ENCODE measurements at regions of chr6 and their contacts with region 1.

Region 1: DNA sequence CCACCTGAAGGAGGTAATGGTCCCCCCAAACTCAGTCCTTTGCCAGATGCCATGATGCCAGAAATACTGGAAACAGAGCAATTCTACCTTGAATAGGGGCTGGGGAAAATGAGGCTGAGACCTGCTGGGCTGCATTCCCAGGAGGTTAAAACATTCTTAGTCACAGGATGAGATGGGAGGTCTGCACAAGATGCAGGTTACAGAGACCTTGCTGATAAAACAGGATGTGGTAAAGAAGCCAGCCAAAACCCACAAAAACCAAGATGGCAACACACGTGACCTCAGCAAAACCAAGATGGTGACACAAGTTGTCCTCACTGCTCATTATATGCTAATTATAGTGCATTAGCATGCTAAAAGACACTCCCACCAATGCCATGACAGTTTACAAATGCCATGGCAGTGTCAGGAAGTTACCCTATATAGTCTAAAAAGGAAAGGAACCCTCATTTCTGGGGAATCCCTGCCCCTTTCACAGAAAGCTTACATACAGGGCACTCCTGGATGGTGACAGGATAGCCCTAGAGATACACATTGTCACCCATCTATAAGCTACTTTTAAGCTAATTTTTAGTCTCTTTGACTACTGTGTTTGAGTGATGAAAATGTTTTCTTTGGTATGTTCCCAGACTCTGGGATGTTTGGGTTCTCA is 979.7 kb downstream of the TBC1D32 start:
- DNase-seq: no peak
- ATAC-seq: no peak
- H3K4me3 ChIP-seq: no peak overlapping the region
- H3K4me1 ChIP-seq: no peaks in the 10 kb centered on the region
- CTCF ChIP-seq: no peak

Region 2: GRCh38 chr6:119742188-119742803 is 612.3 kb before region 1 on chr6:
- intact Hi-C with region 1: loop called in 1 of 2 experiments (anchors 10 kb)
- DNase-seq: peak; percentile 56 to 86 (median 74)
- ATAC-seq: peak; percentile 64
- H3K4me3 ChIP-seq: no peak overlapping the region
- H3K4me1 ChIP-seq: no peaks in the 10 kb centered on the region
- CTCF ChIP-seq: peak; percentile 71

Region 3: DNA sequence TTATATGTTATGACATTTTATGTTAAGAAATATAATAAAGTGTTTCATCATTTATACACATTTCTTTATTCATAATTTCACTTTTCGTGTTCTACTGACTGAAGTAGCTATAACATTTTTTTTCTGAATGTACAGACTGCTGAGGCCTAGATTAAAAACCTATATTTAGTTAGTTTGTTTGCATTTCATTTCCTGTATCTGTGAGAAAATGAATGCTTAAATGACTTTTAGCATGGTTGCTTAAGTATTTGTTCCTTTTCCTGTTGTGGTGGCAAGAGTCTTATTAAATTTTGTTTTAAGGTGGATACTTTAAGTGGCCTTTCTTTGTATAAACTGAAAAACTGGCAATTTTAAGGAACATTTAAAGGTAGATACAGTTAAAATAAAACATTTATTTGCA is 225.3 kb before region 1 on chr6:
- intact Hi-C with region 1: no loop called
- DNase-seq: no peak
- ATAC-seq: no peak
- H3K4me3 ChIP-seq: no peak overlapping the region
- H3K4me1 ChIP-seq: no peaks in the 10 kb centered on the region
- CTCF ChIP-seq: no peak

Region 4: GRCh38 chr6:120290964-120291363 is 63.6 kb before region 1 on chr6:
- intact Hi-C with region 1: no loop called
- DNase-seq: no peak
- ATAC-seq: no peak
- H3K4me3 ChIP-seq: no peak overlapping the region
- H3K4me1 ChIP-seq: no peaks in the 10 kb centered on the region
- CTCF ChIP-seq: no peak

Measured in mucosa of descending colon (tissue), 3 donors.